Calu3 (cell line): ENCODE measurements at regions of chr14 and their contacts with region 1.

Region 1: GRCh38 chr14:47040550-47040949 is 389.0 kb upstream of the RPL10L start:
- DNase-seq: peak; percentile 2
- H3K4me3 Mint-ChIP-seq: no peak overlapping the region
- H3K27ac Mint-ChIP-seq: no peak overlapping the region
- H3K4me1 Mint-ChIP-seq: no peaks in the 10 kb centered on the region
- H3K27me3 Mint-ChIP-seq: no peaks in the 10 kb centered on the region
- CTCF ChIP-seq: no peak

Region 2: DNA sequence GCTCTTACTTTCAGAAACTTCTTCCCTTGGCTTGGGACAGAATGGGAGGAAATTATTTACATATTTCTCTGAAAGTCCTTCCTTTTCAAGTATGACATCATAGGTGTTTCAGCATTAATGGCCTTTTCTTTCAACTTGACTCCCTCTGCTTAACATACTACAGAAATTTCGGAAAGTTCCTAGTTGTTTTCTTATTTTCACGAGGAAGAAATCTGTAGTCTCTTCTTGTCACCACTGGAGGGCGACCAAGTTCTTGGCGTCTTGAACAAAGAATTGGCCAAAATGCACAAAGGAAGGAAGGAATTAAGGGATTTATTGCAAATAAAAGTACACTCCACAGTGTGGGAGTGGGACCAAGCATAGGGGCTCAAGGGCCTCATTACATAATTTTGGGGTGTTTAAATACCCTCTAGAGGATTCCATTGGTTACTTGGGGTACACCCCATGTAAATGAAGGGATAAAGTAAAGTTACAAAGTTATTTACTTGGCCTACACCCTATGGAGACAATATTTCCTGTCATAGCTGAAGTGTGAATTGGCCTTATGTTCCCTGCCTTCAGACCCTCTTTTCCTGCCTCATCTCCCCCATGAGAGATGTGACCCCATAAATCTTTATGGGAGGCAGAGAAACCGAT is 459.4 kb before region 1 on chr14:
- CTCF ChIA-PET with region 1: no interaction called
- intact Hi-C with region 1: loop called (anchors 2 kb)
- DNase-seq: peak; percentile 50
- H3K4me3 Mint-ChIP-seq: no peak overlapping the region
- H3K27ac Mint-ChIP-seq: no peak overlapping the region
- H3K4me1 Mint-ChIP-seq: no peaks in the 10 kb centered on the region
- H3K27me3 Mint-ChIP-seq: no peaks in the 10 kb centered on the region
- CTCF ChIP-seq: no peak

Region 3: GRCh38 chr14:46973295-46973694 is 67.3 kb before region 1 on chr14:
- CTCF ChIA-PET with region 1: no interaction called
- intact Hi-C with region 1: no loop called
- DNase-seq: no peak
- H3K4me3 Mint-ChIP-seq: no peak overlapping the region
- H3K27ac Mint-ChIP-seq: no peak overlapping the region
- H3K4me1 Mint-ChIP-seq: no peaks in the 10 kb centered on the region
- H3K27me3 Mint-ChIP-seq: no peaks in the 10 kb centered on the region
- CTCF ChIP-seq: no peak

Region 4: DNA sequence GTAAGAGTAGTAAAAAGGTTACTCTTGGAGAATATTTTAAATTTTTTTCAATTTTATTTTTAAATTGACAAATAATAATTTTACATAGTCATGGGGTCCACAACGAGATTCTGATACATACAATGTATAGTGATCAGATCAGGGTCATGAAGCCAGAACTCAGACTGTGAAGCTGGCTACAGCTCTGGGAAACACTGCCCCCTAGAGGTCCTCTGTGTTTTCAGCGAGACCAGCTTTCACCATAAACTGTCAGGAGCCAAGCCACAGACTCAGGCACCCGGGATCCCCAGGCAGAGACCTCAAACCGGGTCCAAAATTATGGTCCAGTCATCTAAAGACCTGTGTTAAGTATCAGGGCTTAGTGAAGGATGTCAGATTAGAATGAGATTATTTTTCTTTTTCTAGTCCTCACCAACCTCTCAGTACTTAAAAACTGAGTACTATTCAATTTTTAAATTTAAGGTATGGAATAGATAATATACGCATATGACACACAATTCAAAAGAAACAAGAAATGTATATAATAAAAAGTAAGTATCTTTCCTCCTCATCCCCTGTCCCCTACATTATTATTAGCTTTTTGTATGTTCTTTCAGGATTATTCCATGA is 237.8 kb after region 1 on chr14:
- CTCF ChIA-PET with region 1: no interaction called
- intact Hi-C with region 1: loop called (anchors 10 kb)
- DNase-seq: peak; percentile 46
- H3K4me3 Mint-ChIP-seq: no peak overlapping the region
- H3K27ac Mint-ChIP-seq: no peak overlapping the region
- H3K4me1 Mint-ChIP-seq: no peaks in the 10 kb centered on the region
- H3K27me3 Mint-ChIP-seq: no peaks in the 10 kb centered on the region
- CTCF ChIP-seq: peak; percentile 35

Region 5: GRCh38 chr14:47539031-47539461 is 498.5 kb after region 1 on chr14:
- CTCF ChIA-PET with region 1: no interaction called
- intact Hi-C with region 1: loop called (anchors 2 kb)
- DNase-seq: peak; percentile 2
- H3K4me3 Mint-ChIP-seq: no peak overlapping the region
- H3K27ac Mint-ChIP-seq: no peak overlapping the region
- H3K4me1 Mint-ChIP-seq: no peaks in the 10 kb centered on the region
- H3K27me3 Mint-ChIP-seq: no peaks in the 10 kb centered on the region
- CTCF ChIP-seq: no peak